ENCODE measurements at regions of chr19 and their contacts with region 1.

Region 1: DNA sequence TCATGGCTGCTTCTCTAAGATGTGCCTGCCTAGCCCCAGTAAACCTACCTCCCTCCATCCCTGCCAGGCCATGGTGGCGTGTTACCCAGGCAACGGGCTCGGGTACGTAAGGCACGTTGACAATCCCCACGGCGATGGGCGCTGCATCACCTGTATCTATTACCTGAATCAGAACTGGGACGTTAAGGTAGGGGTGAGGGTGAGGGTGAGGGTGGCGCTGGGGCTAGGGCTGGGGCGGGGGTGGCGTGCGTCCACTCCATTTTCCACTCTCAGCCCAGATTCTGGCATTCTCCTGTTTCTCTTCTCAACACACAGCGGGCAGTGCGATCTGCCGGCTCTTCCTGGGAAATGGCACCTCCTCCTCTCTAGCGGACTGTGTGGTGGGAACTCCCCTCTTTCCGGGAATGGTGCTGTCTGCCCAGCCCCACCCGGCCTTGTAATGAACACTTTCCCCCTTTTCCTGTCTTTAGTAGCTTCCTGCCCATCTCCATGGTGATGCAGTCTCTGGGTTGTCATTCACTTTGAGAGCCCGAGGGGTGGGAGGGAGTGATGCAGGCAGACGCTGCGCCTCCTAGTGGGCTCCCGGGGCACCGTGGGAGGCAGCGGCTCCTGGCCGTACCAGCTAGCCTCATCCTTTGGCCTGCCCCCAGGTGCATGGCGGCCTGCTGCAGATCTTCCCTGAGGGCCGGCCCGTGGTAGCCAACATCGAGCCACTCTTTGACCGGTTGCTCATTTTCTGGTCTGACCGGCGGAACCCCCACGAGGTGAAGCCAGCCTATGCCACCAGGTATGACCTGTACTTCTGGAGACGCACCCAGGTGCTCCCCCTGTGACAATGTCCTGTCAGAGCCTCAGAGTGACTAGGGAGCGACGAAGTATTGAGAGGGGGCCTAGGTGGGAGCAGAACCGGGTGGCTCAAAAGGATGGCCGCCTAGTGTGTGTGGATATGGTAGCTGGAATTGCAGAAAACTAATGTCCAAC is 7.8 kb downstream of the EGLN2 start:
- H3K4me3 ChIP-seq: no peak overlapping the region
- H3K27ac ChIP-seq: peak overlapping the region; percentile 67
- H3K4me1 ChIP-seq: peaks cover 65% of the 10 kb centered on the region
- CTCF ChIP-seq: peak; percentile 97

Region 2: GRCh38 chr19:40658031-40658430 is 148.7 kb before region 1 on chr19:
- CTCF ChIA-PET with region 1: interaction called, 74 read pairs
- POLR2A ChIA-PET with region 1: interaction called, 14 read pairs
- H3K4me3 ChIP-seq: no peak overlapping the region
- H3K27ac ChIP-seq: no peak overlapping the region
- H3K4me1 ChIP-seq: no peaks in the 10 kb centered on the region; the same call in 1 of the 2 replicates
- CTCF ChIP-seq: no peak

Region 3: GRCh38 chr19:40716655-40717324 is 90.0 kb before region 1 on chr19 and contains the starts of genes COQ8B and ITPKC:
- CTCF ChIA-PET with region 1: interaction called, 4 read pairs
- POLR2A ChIA-PET with region 1: interaction called, 17 read pairs
- H3K4me3 ChIP-seq: peak within 1 kb of the TSS; percentile 60
- H3K27ac ChIP-seq: peak within 1 kb of the TSS; percentile 86
- H3K4me1 ChIP-seq: peaks cover 47% of the 10 kb centered on the region
- CTCF ChIP-seq: peak; percentile 47

Region 4: DNA sequence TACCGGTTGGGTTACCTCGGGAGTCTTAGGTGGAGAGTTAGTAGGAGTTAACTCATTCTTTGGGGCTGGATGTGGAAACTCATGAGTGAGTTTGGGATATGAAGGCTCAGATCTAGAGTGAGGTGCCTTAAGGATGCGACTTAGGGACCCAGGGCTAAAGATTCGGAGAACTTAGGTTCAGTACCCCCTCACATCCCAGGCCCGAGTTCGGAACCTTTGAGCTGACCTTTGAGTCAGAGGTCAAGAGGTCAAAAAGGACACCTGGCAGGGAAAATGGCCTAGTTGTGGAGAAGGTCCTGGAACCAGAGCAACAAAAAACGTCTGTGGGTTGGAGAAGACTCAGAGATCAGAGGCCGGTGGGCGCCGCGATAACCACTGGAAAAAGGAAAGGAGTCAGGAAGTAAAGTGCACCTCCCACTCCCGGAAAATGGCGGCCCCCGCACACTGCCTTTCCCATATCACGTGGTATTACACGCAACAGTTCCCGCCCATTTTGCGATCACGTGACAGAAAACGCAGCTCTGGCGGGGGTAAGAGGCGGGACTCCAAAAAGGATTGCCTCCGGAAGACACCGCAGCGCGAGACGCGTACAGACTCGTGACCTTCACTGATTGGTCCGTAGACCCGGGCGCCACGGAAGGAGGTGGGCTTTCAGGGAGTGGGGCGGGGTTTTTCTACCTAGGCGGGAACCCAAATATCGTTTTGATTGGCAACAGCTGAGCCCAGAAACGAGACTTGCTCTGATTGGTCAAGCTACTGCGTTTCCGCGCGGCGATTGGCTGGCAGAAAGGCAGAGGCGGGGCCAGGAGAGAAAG is 56.5 kb before region 1 on chr19 and contains the start of gene ACTMAP:
- CTCF ChIA-PET with region 1: interaction called, 38 read pairs
- POLR2A ChIA-PET with region 1: interaction called, 56 read pairs
- H3K4me3 ChIP-seq: peak within 1 kb of the TSS; percentile 64
- H3K27ac ChIP-seq: peak within 1 kb of the TSS; percentile 93
- H3K4me1 ChIP-seq: peaks cover 32% of the 10 kb centered on the region
- CTCF ChIP-seq: no peak

Region 5: DNA sequence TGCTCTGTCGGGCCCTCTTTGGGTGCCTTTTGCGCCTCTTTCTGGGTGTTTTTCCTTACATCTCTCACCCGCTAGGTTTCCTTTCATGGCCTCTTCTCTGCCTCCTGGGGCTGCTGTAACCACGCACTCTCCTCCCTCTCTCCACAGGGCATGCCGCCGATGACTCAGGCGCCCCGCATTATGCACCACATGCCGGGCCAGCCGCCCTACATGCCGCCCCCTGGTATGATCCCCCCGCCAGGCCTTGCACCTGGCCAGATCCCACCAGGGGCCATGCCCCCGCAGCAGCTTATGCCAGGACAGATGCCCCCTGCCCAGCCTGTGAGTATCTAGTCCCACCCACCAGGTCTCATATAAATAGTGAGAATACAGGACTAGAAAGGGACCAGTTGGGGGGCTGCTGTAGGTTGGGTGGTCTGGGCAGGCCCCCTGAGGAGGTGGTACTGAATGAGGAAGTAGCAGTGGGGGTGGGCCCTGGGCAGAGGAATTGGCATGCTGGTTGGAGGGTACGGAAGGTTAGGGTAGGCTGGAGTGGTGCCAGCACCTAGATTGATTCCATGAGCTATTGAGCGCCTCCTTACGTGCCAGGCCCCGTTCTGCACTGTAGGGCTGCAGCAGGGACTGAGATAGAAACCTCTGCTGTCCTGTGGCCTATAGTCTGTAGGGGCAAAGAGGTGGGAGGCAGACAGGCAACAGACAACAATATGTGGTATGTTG is 43.9 kb before region 1 on chr19:
- CTCF ChIA-PET with region 1: interaction called, 13 read pairs
- POLR2A ChIA-PET with region 1: interaction called, 11 read pairs
- H3K4me3 ChIP-seq: no peak overlapping the region
- H3K27ac ChIP-seq: peak overlapping the region; percentile 34; the same call in 1 of the 2 replicates
- H3K4me1 ChIP-seq: no peaks in the 10 kb centered on the region
- CTCF ChIP-seq: no peak

Region 6: DNA sequence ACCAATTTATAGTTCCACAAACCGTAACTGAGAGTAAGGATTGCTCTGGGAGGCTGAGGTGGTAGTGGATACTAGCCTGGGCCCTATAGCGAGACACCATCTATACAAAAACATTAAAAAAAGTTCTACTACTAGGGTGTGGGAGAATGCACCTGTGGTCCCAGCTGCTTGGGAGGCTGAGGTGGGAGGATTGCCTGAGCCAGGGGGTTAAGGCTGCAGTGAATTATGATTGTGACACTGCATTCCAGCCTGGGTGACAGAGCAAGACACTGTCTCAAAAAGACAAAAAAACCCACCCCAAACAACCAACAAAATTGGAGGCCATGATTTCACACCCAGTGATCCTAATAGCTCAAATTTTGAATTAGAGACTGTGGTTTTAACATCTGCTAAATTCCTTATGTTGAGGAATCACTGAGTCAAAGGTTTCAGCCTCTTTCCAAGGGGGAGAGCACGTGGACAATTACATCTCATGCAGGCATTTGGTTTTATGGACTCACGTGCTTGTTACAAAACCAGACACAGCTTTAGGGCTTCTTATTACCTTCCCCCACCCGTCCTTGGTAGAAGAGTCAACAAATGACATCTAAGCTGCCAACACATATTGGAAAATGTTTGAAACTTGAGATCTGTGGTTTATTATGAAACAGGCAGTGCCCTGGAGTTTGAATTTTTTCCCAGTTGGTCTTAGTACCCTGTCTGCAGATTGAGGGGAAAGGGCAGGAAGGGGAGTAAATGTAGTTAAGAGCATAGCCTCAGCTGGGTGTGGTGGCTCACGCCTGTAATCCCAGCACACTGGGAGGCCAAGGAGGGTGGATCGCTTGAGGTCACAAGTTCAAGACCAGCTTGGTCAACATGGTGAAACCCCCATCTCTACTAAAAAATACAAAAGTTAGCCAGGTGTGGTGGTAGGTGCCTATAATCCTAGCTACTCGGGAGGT is 25.0 kb after region 1 on chr19:
- CTCF ChIA-PET with region 1: interaction called, 8 read pairs
- POLR2A ChIA-PET with region 1: interaction called, 13 read pairs
- H3K4me3 ChIP-seq: no peak overlapping the region
- H3K27ac ChIP-seq: peak overlapping the region; percentile 84
- H3K4me1 ChIP-seq: peaks cover 26% of the 10 kb centered on the region
- CTCF ChIP-seq: no peak